ENCODE measurements at regions of chr7 and their contacts with region 1.

Region 1: DNA sequence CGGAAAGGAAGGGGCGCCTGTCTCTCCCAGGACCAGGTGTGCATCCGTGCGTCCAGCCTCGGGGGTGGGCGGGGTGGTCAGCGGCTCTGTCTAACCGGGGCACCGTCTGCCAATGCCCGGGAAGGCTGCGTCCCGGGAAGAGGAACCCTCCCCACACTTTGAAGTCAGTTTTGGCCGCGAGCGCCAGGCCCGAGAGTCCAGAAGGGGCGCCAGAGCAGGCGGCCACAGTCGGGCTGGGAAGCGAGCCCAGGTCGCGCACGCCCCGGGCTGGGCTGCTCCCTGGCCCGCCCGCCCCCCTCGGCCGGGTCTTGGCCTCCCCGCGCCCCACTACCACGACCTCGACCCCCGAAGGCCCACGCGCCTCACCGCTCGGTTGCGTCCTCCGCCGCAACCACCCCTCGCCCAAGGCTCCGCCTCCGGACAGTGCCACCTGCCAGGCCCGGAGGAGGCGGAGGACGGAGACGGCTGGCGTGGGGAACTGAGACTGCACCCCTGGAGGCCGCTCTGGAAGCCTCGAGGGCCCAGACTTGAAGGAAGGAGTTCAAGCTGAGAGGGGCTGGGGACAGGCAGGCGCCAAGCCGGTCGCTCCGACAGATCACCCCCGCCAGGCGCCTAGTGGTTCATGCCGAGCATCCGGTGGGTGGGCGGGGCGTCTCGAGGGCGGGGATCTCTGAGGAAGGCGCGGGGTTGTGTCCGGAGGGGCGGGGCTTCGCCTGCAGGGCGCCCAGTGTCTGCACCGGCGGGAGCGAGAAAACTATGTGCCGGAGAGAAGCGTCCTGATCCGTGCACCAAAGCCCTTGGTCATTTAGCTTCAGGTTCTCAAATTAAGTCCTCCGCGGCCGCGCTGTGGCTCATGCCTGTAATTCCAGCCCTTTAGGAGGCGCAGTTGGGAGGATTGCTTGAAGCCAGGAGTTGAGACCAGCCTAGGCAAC is at the start of gene BRAT1:
- DNase-seq: peak; percentile 96 to 98 (median 97)
- H3K4me3 ChIP-seq: peak within 1 kb of the TSS; percentile 93
- H3K27ac ChIP-seq: peak within 1 kb of the TSS; percentile 85 to 97
- H3K4me1 ChIP-seq: peaks cover 15% of the 10 kb centered on the region
- H3K27me3 ChIP-seq: no peaks in the 10 kb centered on the region
- CTCF ChIP-seq: peak; percentile 20 to 44 (median 41)
- EP300 ChIP-seq: no peak
- POLR2A ChIP-seq: no peak
- total RNA-seq, gene BRAT1: 26.9 to 33.5 (median 30.2) TPM

Region 2: GRCh38 chr7:2617325-2617905 is 62.0 kb after region 1 on chr7:
- intact Hi-C with region 1: loop called in 1 of 4 experiments (anchors 2 kb)
- DNase-seq: no peak
- H3K4me3 ChIP-seq: no peak overlapping the region
- H3K27ac ChIP-seq: no peak overlapping the region
- H3K4me1 ChIP-seq: peaks cover 8% of the 10 kb centered on the region
- H3K27me3 ChIP-seq: no peaks in the 10 kb centered on the region
- CTCF ChIP-seq: no peak
- EP300 ChIP-seq: no peak
- POLR2A ChIP-seq: no peak

Region 3: GRCh38 chr7:2632733-2633537 is 77.5 kb after region 1 on chr7:
- intact Hi-C with region 1: loop called in 1 of 4 experiments (anchors 10 kb)
- DNase-seq: peak; percentile 54 to 82 (median 77)
- H3K4me3 ChIP-seq: peak overlapping the region; percentile 90
- H3K27ac ChIP-seq: peak overlapping the region; percentile 66 to 83
- H3K4me1 ChIP-seq: peaks cover 22% of the 10 kb centered on the region
- H3K27me3 ChIP-seq: no peaks in the 10 kb centered on the region
- CTCF ChIP-seq: no peak
- EP300 ChIP-seq: no peak
- POLR2A ChIP-seq: no peak

Region 4: DNA sequence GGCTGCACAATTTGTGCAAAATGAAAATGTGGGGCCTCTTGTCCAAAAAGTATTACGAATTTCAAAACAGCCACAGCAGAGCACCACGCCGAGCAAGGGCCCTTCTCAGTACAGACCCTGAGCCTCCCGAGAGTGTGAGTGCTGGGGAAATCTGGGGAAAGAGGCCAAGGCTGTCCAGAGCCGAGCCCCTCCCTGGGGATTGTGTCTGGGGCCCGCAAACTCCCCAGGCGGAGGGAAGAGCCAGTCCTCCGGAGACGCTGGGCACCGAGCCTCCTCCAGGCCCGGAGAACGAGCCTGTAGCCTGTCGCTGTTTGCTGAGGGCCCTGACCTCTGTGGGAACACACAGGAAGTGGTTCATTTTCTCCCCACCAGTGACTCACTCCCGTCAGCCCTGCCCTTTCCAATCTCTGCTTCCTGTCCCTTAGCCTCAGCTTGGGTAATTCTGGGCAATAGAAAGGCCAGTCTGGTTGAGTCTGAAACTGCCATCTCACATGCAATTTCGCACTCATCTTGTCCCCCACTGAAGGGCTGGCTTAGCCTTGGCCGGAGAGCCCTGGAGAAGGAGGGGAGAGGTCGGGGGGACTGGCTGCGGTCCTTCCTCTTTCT is 308.2 kb after region 1 on chr7:
- intact Hi-C with region 1: loop called in 1 of 4 experiments (anchors 10 kb)
- DNase-seq: peak; percentile 85 to 91 (median 89)
- H3K4me3 ChIP-seq: no peak overlapping the region
- H3K27ac ChIP-seq: peak overlapping the region; percentile 93
- H3K4me1 ChIP-seq: peaks cover 11% of the 10 kb centered on the region
- H3K27me3 ChIP-seq: no peaks in the 10 kb centered on the region
- CTCF ChIP-seq: peak in 2 of 3 donors; percentile 10 to 19
- EP300 ChIP-seq: peak; percentile 15
- POLR2A ChIP-seq: peak; percentile 68